ENCODE measurements at regions of chr4 and their contacts with region 1.

Region 1: GRCh38 chr4:11487876-11488544 is 59.3 kb upstream of the HS3ST1 start:
- DNase-seq: peak; percentile 61 to 63 (median 61)
- H3K4me3 ChIP-seq: peak overlapping the region in 1 of 3 experiments; percentile 6
- H3K4me3 Mint-ChIP-seq: no peak overlapping the region
- H3K27ac ChIP-seq: peak overlapping the region in 1 of 2 donors; percentile 95
- H3K27ac Mint-ChIP-seq: peak overlapping the region; percentile 41 to 97 (median 88)
- H3K4me1 ChIP-seq: peaks cover 42 to 55% of the 10 kb centered on the region in 2 donors
- H3K4me1 Mint-ChIP-seq: peaks cover 40% of the 10 kb centered on the region
- H3K27me3 ChIP-seq: no peaks in the 10 kb centered on the region
- H3K27me3 Mint-ChIP-seq: peaks cover 0 to 2% (median 0%) of the 10 kb centered on the region in 3 donors
- CTCF ChIP-seq: no peak

Region 2: DNA sequence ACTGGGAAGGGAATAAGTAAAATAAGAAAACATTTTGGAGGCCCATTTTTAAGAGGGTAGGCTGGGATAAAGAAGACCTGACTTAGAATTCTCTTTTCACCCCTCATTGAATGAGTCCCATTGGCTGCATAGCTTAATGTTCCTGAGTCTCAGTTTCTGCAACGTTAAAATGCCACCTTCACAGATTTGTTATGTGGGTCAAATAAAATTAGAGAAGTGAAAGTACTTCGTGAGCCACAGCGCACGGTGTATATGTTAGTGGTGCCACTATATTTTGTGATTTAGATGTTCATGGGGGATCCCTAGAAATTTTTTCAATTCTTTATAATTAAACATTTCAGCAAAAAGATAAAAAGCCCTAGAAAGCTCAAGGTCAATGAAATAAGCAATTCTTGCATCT is 49.8 kb after region 1 on chr4:
- intact Hi-C with region 1: loop called in 1 of 2 experiments (anchors 5 kb)
- DNase-seq: peak in 2 of 3 donors; percentile 8 to 15
- H3K4me3 ChIP-seq: no peak overlapping the region
- H3K4me3 Mint-ChIP-seq: no peak overlapping the region
- H3K27ac ChIP-seq: no peak overlapping the region
- H3K27ac Mint-ChIP-seq: no peak overlapping the region
- H3K4me1 ChIP-seq: no peaks in the 10 kb centered on the region
- H3K4me1 Mint-ChIP-seq: no peaks in the 10 kb centered on the region
- H3K27me3 ChIP-seq: no peaks in the 10 kb centered on the region
- H3K27me3 Mint-ChIP-seq: no peaks in the 10 kb centered on the region
- CTCF ChIP-seq: no peak

Measured in CD14-positive monocyte (primary cell).